OCI-LY7 (cell line): ENCODE measurements at regions of chr3 and their contacts with region 1.

Region 1: GRCh38 chr3:167734498-167735232 is at the start of gene PDCD10:
- DNase-seq: peak; percentile 99
- H3K4me3 ChIP-seq: peak within 1 kb of the TSS; percentile 96
- H3K27ac ChIP-seq: peak within 1 kb of the TSS; percentile 93
- H3K4me1 ChIP-seq: peaks cover 56% of the 10 kb centered on the region
- CTCF ChIP-seq: no peak
- total RNA-seq, gene PDCD10: 76.3 and 106 TPM in 2 replicates

Region 2: GRCh38 chr3:167380004-167380689 is 354.5 kb before region 1 on chr3 and contains the start of gene ZBBX:
- CTCF ChIA-PET with region 1: no interaction called
- POLR2A ChIA-PET with region 1: no interaction called
- intact Hi-C with region 1: loop called (anchors 5 kb)
- DNase-seq: peak; percentile 87
- H3K4me3 ChIP-seq: peak within 1 kb of the TSS; percentile 63
- H3K27ac ChIP-seq: no peak within 1 kb of the TSS
- H3K4me1 ChIP-seq: no peaks in the 10 kb centered on the region
- CTCF ChIP-seq: peak; percentile 95
- total RNA-seq, gene ZBBX: not detected in 2 replicates

Region 3: DNA sequence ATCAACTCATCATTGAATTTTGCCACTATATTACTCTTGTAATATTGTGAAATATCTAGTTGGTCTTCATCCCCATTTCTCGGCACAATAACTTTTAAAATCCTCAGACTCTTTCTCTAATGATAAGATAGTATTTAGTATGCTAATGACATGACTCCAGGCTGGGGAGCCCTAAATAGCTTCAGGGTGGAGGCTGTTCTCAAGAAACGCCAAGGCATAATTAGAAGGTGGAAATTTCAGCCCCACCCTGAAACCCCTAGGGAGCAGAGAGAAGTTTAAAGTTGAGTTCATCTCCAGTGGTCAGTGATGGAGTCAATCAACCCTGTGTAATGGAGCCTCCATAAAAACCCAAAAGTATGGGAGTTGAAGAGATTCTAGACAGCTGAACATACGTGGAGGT is 179.8 kb before region 1 on chr3:
- CTCF ChIA-PET with region 1: no interaction called
- POLR2A ChIA-PET with region 1: no interaction called
- intact Hi-C with region 1: no loop called
- DNase-seq: no peak
- H3K4me3 ChIP-seq: no peak overlapping the region
- H3K27ac ChIP-seq: no peak overlapping the region
- H3K4me1 ChIP-seq: no peaks in the 10 kb centered on the region
- CTCF ChIP-seq: no peak

Region 4: GRCh38 chr3:167750272-167750971 is 15.8 kb after region 1 on chr3:
- CTCF ChIA-PET with region 1: interaction called, 3 read pairs
- POLR2A ChIA-PET with region 1: interaction called, 40 read pairs
- intact Hi-C with region 1: loop called (anchors 1 kb)
- DNase-seq: peak; percentile 81
- H3K4me3 ChIP-seq: peak overlapping the region; percentile 55
- H3K27ac ChIP-seq: peak overlapping the region; percentile 56
- H3K4me1 ChIP-seq: peaks cover 83% of the 10 kb centered on the region
- CTCF ChIP-seq: no peak

Region 5: DNA sequence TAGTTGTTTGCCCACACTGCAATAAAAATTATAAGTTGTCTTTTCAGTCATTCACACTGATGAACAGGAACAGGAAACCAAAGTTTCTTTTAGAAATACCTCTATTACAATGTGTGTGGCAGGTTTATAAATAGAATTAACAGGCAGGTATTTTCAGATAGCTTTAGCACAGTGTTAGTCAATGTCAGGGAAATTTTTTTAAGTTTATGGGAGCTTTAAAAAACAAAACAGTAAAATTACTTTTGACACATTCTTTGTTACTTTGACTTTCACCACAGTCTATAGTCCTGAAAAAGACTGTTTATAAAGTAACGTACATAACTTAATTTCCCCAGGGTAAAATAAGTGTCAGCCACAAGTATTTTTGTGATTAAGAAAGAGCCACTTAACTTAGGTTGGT is 38.9 kb after region 1 on chr3:
- CTCF ChIA-PET with region 1: interaction called, 4 read pairs
- POLR2A ChIA-PET with region 1: interaction called, 26 read pairs
- intact Hi-C with region 1: loop called (anchors 1 kb)
- DNase-seq: peak; percentile 52
- H3K4me3 ChIP-seq: peak overlapping the region; percentile 54
- H3K27ac ChIP-seq: peak overlapping the region; percentile 89
- H3K4me1 ChIP-seq: peaks cover 59% of the 10 kb centered on the region
- CTCF ChIP-seq: no peak

Region 6: GRCh38 chr3:167882067-167882667 is 147.5 kb after region 1 on chr3:
- CTCF ChIA-PET with region 1: no interaction called
- POLR2A ChIA-PET with region 1: interaction called, 3 read pairs
- intact Hi-C with region 1: loop called (anchors 2 kb)
- DNase-seq: peak; percentile 83
- H3K4me3 ChIP-seq: no peak overlapping the region
- H3K27ac ChIP-seq: no peak overlapping the region
- H3K4me1 ChIP-seq: peaks cover 6% of the 10 kb centered on the region
- CTCF ChIP-seq: peak; percentile 91

Region 7: DNA sequence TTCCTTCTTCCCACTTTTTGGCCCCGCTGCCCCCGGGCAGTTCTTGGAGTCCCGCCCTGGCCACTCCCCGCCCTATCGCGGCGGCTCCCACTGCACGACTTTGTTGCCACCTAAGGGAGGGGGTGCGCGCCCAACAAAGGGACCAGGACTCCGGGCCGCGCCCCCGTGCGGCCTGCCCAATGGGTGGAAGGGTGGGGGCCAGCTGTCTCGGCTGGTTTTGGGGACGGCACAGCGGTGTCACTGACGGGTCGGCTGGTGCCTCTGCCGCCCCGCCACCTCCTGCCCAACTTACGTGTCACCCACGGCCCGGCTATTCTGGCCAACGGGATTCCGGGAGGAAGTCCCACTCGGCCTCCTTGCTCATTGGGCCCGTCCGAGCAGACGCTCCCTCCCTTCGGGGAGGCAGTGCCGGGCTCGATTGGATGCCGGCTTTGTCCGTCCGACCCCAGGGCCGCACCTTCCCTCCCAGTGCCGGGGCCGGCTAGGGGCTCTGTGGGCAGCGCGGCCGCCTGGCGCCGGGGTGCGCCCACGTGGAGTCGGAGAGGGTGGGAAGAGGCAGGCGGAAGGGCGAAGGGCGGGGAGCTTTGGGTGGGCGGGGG is 361.0 kb after region 1 on chr3 and contains the start of gene GOLIM4:
- CTCF ChIA-PET with region 1: no interaction called
- POLR2A ChIA-PET with region 1: no interaction called
- intact Hi-C with region 1: loop called (anchors 1 kb)
- DNase-seq: peak; percentile 96
- H3K4me3 ChIP-seq: peak within 1 kb of the TSS; percentile 80
- H3K27ac ChIP-seq: peak within 1 kb of the TSS; percentile 84
- H3K4me1 ChIP-seq: peaks cover 31% of the 10 kb centered on the region
- CTCF ChIP-seq: peak; percentile 45; the same call in 1 of the 2 replicates
- total RNA-seq, gene GOLIM4: 31.2 and 42.6 TPM in 2 replicates

Region 8: GRCh38 chr3:168205451-168205850 is 470.8 kb after region 1 on chr3:
- CTCF ChIA-PET with region 1: no interaction called
- POLR2A ChIA-PET with region 1: no interaction called
- intact Hi-C with region 1: loop called (anchors 10 kb)
- DNase-seq: peak; percentile 50
- H3K4me3 ChIP-seq: peak overlapping the region; percentile 68
- H3K27ac ChIP-seq: peak overlapping the region; percentile 98
- H3K4me1 ChIP-seq: peaks cover 43% of the 10 kb centered on the region
- CTCF ChIP-seq: no peak